ENCODE measurements at regions of chr2 and their contacts with region 1.

Region 1: GRCh38 chr2:37219041-37219440 is 12.4 kb downstream of the CEBPZ start:
- DNase-seq: no peak
- ATAC-seq: no peak

Region 2: GRCh38 chr2:37231241-37232130 is 12.4 kb after region 1 on chr2 and contains the starts of genes CEBPZ and NDUFAF7:
- intact Hi-C with region 1: loop called (anchors 1 kb)
- DNase-seq: peak; percentile 93
- ATAC-seq: peak; percentile 98
- total RNA-seq, gene CEBPZ: 57.6 TPM
- total RNA-seq, gene NDUFAF7: 21.1 TPM